ENCODE measurements at regions of chr9 and their contacts with region 1.

Region 1: GRCh38 chr9:99964336-99964735 is 57.9 kb downstream of the STX17 start:
- DNase-seq: no peak
- ATAC-seq: no peak

Region 2: DNA sequence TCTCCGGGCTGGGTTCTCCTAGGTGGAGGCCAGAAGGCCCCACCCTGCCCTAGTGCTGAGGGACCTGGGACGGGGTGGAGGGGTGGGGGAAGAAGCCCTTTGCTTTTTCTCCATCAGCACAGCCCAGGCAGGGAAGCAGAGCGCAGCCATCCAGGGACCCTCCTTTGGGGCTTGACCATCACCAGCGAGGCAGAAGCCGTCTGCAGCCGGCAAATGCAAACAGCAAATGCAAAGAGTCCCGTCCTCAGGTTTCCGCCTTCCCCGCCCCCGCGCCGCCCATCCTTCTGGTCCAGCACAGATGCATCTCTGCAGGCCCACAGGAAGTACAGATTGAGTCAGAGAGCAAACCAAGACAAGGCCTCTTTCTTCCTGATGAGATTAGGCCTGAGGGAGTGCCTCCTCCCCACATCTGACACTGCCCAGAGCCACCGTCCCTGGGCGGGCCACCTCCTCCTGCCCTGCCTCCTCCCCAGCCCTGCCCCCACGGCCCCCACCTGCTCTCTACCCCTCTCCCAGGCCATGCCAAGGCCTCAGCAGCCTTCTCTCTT is 1795.3 kb before region 1 on chr9:
- intact Hi-C with region 1: no loop called
- DNase-seq: peak; percentile 72
- ATAC-seq: peak; percentile 95

Region 3: DNA sequence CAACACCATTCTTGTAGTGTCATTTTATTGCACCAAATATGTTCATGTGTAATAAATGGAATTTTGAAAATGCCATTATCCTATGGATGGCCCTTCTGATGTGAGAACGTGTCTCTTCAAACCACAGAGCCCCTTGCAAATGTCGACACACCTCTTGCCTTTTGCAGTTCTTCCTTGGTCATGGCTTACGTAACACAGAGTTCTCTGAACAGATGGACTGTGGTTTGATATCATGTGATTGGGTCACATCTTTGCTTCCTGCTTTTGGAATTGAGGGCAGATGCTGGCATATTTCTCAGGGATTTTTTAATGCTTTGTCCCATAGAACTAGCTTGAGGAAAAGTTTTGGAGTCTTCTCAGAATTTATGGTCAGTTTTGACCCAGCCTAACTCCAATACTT is 854.8 kb before region 1 on chr9:
- intact Hi-C with region 1: no loop called
- DNase-seq: no peak
- ATAC-seq: peak; percentile 44

Region 4: GRCh38 chr9:99980598-99980997 is 16.3 kb after region 1 on chr9:
- intact Hi-C with region 1: loop called (anchors 2 kb)
- DNase-seq: no peak
- ATAC-seq: no peak

Region 5: DNA sequence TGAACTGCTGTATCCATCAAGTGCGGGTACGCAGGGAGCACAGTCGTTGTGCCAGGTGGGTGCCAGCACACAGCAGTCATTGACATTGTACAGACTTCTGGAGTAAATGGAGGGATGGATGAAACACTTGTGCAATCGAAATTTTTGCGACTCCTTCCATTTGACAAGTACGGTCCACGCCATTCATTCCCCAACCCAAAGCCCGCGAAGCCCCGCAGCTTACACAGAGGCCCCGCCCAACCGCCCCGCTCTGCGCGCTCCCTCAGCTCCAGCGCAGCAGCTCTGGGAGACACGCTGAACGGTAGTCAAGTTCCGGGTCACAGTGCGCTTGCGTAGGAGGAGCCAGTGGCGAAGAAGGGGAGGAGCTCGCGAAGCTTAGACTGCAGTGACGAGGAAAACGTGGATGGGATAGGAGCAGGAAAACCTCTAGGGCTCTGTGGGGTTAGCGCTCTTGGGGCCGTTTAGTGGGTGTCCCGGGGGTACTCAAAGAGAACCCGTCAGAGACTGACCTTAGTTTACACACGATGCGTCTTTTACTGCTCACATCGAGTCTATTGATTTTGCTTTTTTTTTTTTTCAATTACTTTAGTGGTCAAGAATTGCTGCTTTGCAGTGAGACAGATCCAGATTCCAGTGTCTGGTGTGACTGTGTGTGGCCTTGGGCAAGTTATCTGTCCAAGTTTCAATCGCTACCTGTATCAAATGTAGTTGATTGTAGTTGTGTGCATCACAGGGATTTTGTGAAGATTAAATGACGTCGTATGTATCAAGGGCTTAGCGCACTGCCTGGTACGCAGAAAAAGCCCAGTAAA is 447.3 kb after region 1 on chr9:
- intact Hi-C with region 1: no loop called
- DNase-seq: peak; percentile 91
- ATAC-seq: peak; percentile 99

Measured in sciatic nerve (tissue), 2 donors.